GM23248 (cell line): ENCODE measurements at regions of chr3 and their contacts with region 1.

Region 1: GRCh38 chr3:86785386-86785785 is 205.6 kb downstream of the VGLL3 start:
- DNase-seq: peak; percentile 77
- H3K4me3 ChIP-seq: no peak overlapping the region
- H3K27ac ChIP-seq: no peak overlapping the region
- H3K4me1 ChIP-seq: peaks cover 48% of the 10 kb centered on the region
- H3K27me3 ChIP-seq: no peaks in the 10 kb centered on the region

Region 2: GRCh38 chr3:86388820-86389219 is 396.6 kb before region 1 on chr3:
- in situ Hi-C with region 1: no loop called
- DNase-seq: no peak
- H3K4me3 ChIP-seq: no peak overlapping the region
- H3K27ac ChIP-seq: no peak overlapping the region
- H3K4me1 ChIP-seq: no peaks in the 10 kb centered on the region
- H3K27me3 ChIP-seq: no peaks in the 10 kb centered on the region

Region 3: GRCh38 chr3:86451749-86452148 is 333.6 kb before region 1 on chr3:
- in situ Hi-C with region 1: no loop called
- DNase-seq: no peak
- H3K4me3 ChIP-seq: no peak overlapping the region
- H3K27ac ChIP-seq: no peak overlapping the region
- H3K4me1 ChIP-seq: no peaks in the 10 kb centered on the region
- H3K27me3 ChIP-seq: no peaks in the 10 kb centered on the region

Region 4: GRCh38 chr3:86684486-86684885 is 100.9 kb before region 1 on chr3:
- in situ Hi-C with region 1: no loop called
- DNase-seq: no peak
- H3K4me3 ChIP-seq: no peak overlapping the region
- H3K27ac ChIP-seq: no peak overlapping the region
- H3K4me1 ChIP-seq: no peaks in the 10 kb centered on the region
- H3K27me3 ChIP-seq: no peaks in the 10 kb centered on the region

Region 5: GRCh38 chr3:86990734-86991481 is 205.5 kb after region 1 on chr3 and contains the start of gene VGLL3:
- in situ Hi-C with region 1: loop called (anchors 10 kb)
- DNase-seq: peak; percentile 93
- H3K4me3 ChIP-seq: peak within 1 kb of the TSS; percentile 89
- H3K27ac ChIP-seq: peak within 1 kb of the TSS; percentile 79
- H3K4me1 ChIP-seq: peaks cover 44% of the 10 kb centered on the region
- H3K27me3 ChIP-seq: no peaks in the 10 kb centered on the region
- total RNA-seq, gene VGLL3: 179 and 213 TPM in 2 replicates

Region 6: DNA sequence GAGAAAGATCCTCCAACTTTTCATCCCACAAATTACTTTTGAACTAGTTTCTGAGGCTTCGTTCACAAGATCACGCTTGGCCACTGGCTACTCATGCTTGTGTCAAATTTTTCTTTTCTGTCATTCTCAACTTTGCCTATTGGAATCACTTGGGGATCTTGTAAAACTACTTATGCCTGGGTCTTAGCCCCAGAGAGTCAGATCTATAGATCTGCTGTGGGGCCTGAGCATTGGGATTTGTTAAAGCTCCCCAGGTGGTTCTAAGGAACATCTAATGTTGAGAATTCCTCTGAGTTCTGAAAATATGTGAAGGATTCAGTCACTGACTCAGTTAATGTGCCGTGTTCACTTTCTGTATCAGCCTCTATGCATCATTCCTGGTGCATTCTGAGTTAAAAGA is 277.3 kb after region 1 on chr3:
- in situ Hi-C with region 1: no loop called
- DNase-seq: no peak
- H3K4me3 ChIP-seq: no peak overlapping the region
- H3K27ac ChIP-seq: no peak overlapping the region
- H3K4me1 ChIP-seq: no peaks in the 10 kb centered on the region
- H3K27me3 ChIP-seq: no peaks in the 10 kb centered on the region